ENCODE measurements at regions of chr1 and their contacts with region 1.

Region 1: DNA sequence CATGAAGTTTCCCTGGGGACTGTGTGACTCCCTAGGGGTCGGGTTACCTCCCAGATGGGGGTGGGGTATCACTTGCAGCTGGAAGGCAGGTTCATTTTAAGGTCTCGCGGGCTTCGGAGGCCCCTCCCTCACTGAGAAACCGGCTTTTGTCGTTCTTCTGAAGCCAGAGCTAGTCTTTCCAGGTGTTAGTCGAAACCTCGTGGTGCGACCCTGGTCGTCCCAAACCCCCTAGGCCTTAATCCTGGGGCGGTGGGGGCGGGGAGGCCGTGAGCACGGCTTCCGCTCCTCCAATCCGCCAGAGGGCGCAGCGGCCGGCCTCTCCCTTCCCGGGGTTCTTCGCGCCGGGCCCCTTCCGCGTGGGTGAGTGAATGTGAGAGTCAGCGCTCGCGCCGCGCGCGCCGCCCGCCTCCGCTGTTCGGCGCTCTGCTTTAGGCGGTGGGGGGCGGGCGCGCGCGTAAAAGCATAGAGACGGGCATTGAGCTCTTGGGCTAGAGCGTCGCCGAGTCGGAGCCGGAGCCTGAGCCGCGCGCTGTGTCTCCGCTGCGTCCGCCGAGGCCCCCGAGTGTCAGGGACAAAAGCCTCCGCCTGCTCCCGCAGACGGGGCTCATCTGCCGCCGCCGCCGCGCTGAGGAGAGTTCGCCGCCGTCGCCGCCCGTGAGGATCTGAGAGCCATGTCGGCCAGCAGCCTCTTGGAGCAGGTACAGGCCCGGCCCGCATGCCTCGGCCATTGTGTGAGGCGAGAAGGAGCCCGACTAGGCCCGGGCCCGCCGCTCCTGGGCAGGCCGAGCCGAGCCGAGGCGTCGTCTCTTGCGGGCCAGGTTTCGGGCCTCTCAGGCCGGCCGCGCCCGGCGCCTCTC is at the start of gene YTHDF2:
- DNase-seq: peak; percentile 96
- ATAC-seq: peak; percentile 95
- H3K4me3 ChIP-seq: peak within 1 kb of the TSS; percentile 93
- H3K27ac ChIP-seq: peak within 1 kb of the TSS; percentile 92
- H3K4me1 ChIP-seq: peaks cover 2% of the 10 kb centered on the region; the same call in 1 of the 2 replicates
- H3K27me3 ChIP-seq: no peaks in the 10 kb centered on the region
- CTCF ChIP-seq: peak; percentile 95
- POLR2A ChIP-seq: peak; percentile 87
- RAD21 ChIP-seq: peak; percentile 53
- total RNA-seq, gene YTHDF2: 88.3 and 94.3 TPM in 2 replicates

Region 2: GRCh38 chr1:28577052-28577678 is 159.5 kb before region 1 on chr1:
- CTCF ChIA-PET with region 1: no interaction called
- POLR2A ChIA-PET with region 1: no interaction called
- dilution Hi-C with region 1: no loop called
- in situ Hi-C with region 1: no loop called
- intact Hi-C with region 1: no loop called
- DNase-seq: no peak
- ATAC-seq: no peak
- H3K4me3 ChIP-seq: no peak overlapping the region
- H3K27ac ChIP-seq: no peak overlapping the region
- H3K4me1 ChIP-seq: peaks cover 6% of the 10 kb centered on the region; the same call in 1 of the 2 replicates
- H3K27me3 ChIP-seq: no peaks in the 10 kb centered on the region
- CTCF ChIP-seq: no peak
- POLR2A ChIP-seq: no peak
- RAD21 ChIP-seq: no peak

Region 3: DNA sequence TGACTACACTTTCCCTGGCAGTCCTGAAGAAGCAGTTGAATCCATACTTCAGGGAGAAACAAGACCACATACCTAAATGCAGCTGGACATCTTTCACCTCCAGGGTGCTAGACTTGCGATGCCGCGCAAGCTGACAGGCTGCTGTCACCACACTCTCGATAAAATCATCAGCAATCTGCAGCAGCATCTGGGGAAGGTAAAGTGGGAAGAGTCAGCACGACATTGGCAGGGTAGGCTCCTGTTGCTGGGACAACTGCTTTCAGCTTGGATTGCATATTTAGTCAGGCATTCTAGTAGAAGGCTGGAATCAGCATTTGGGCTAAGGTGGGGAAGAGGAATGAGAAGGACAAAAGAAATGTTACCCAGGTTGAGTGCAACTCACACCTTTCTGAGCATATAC is 123.5 kb before region 1 on chr1:
- CTCF ChIA-PET with region 1: no interaction called
- POLR2A ChIA-PET with region 1: no interaction called
- dilution Hi-C with region 1: no loop called
- in situ Hi-C with region 1: no loop called
- intact Hi-C with region 1: no loop called
- DNase-seq: no peak
- ATAC-seq: no peak
- H3K4me3 ChIP-seq: no peak overlapping the region
- H3K27ac ChIP-seq: no peak overlapping the region
- H3K4me1 ChIP-seq: no peaks in the 10 kb centered on the region
- H3K27me3 ChIP-seq: no peaks in the 10 kb centered on the region
- CTCF ChIP-seq: no peak
- POLR2A ChIP-seq: no peak
- RAD21 ChIP-seq: no peak

Region 4: GRCh38 chr1:28648474-28649198 is 88.0 kb before region 1 on chr1 and contains the start of gene RNU11:
- CTCF ChIA-PET with region 1: no interaction called
- POLR2A ChIA-PET with region 1: interaction called, 6 read pairs
- dilution Hi-C with region 1: no loop called
- in situ Hi-C with region 1: no loop called
- intact Hi-C with region 1: loop called (anchors 1 kb)
- DNase-seq: peak; percentile 100
- ATAC-seq: peak; percentile 72
- H3K4me3 ChIP-seq: peak within 1 kb of the TSS; percentile 28
- H3K27ac ChIP-seq: peak within 1 kb of the TSS; percentile 79
- H3K4me1 ChIP-seq: peaks cover 1% of the 10 kb centered on the region
- H3K27me3 ChIP-seq: no peaks in the 10 kb centered on the region
- CTCF ChIP-seq: no peak
- POLR2A ChIP-seq: peak; percentile 100
- RAD21 ChIP-seq: peak; percentile 15; the same call in 1 of the 2 replicates
- total RNA-seq, gene RNU11: under 0.01 TPM in 1 of 2 replicates, not detected in the other

Region 5: DNA sequence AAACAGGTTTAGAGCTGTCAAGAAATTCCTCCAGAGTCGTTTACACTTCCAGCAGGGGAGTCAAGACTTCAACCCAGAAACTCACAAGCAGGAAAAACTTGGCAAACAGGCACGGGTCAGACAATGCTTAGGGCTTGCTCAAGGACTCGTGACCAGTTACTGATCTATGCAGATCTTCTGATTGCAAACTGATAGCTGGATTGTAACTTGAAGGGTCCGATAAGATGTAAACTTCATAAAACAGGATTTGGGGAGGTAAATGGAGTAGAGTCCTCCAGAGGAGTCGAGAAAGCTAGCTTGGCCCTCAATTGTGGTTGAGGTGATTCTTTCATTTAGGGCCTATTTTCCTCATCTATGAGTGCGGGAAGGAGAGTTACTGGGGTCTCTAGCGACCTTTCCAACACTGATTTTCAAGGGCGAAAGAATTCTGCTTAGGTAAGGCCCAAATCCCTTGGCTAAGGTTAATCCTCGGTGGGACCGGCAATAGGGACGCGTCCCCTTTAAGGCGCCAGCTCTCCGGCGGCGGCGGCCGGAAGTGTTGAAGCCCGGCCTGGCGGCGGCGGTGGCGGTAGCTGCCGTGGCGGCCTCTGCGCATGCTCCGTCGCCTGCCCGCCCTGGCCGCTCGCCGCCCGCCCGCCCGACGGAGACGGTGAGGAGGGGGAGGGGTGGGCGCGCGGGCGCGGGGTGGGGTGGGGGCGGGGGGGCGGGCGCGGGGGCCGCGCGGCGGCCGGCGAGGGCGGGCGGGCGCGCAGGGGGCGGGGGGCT is 68.3 kb before region 1 on chr1 and contains the start of gene GMEB1:
- CTCF ChIA-PET with region 1: no interaction called
- POLR2A ChIA-PET with region 1: interaction called, 9 read pairs
- dilution Hi-C with region 1: no loop called
- in situ Hi-C with region 1: no loop called
- intact Hi-C with region 1: loop called (anchors 5 kb)
- DNase-seq: peak; percentile 77
- ATAC-seq: peak; percentile 81
- H3K4me3 ChIP-seq: peak within 1 kb of the TSS; percentile 59
- H3K27ac ChIP-seq: peak within 1 kb of the TSS; percentile 93
- H3K4me1 ChIP-seq: peaks cover 2% of the 10 kb centered on the region
- H3K27me3 ChIP-seq: no peaks in the 10 kb centered on the region
- CTCF ChIP-seq: 0 out of 2 replicates have a peak, but pooled peaks have one; percentile 5
- POLR2A ChIP-seq: no peak
- RAD21 ChIP-seq: no peak
- total RNA-seq, gene GMEB1: 7.9 and 8.6 TPM in 2 replicates

Region 6: GRCh38 chr1:28718586-28719331 is 17.9 kb before region 1 on chr1:
- CTCF ChIA-PET with region 1: interaction called, 10 read pairs
- POLR2A ChIA-PET with region 1: no interaction called
- dilution Hi-C with region 1: no loop called
- in situ Hi-C with region 1: no loop called
- intact Hi-C with region 1: no loop called
- DNase-seq: peak; percentile 67
- ATAC-seq: peak; percentile 87
- H3K4me3 ChIP-seq: no peak overlapping the region
- H3K27ac ChIP-seq: peak overlapping the region; percentile 42; the same call in 1 of the 2 replicates
- H3K4me1 ChIP-seq: peaks cover 4% of the 10 kb centered on the region
- H3K27me3 ChIP-seq: no peaks in the 10 kb centered on the region
- CTCF ChIP-seq: no peak
- POLR2A ChIP-seq: no peak
- RAD21 ChIP-seq: no peak

Region 7: DNA sequence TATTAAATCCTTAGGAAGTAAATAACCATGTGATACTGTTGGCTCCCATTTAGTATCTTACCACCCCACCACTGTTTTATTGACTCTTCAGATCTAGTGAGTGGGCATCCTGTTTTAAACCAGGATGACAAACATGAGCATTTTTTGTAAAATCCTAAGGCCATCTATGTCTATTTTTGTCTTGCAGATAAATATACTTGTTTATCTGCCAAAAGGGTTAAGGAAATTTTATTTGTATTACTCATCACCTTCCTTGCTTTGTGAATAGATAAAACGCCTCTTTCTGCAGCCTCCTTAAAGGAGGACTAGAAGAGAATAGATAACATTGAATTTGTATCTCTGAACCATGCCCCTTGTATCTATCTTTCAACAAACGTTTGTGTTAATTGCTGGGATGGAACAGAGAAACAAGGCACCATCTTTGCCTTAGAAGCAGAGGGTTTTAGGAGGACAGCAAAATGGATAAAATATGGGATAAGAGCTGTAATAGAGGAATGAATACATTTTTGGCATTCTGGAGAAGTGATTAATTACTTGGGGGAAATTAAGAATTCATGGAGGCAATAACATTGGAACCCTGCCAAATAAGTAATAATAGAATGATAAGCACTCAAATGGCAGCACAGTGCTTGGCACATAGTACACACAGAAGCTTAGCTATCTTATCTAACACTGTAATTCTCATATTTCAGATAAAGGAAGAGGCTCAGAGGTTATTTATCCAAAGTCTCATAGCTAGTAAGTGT is 14.8 kb after region 1 on chr1:
- CTCF ChIA-PET with region 1: interaction called, 8 read pairs
- POLR2A ChIA-PET with region 1: interaction called, 8 read pairs
- dilution Hi-C with region 1: no loop called
- in situ Hi-C with region 1: no loop called
- intact Hi-C with region 1: loop called (anchors 2 kb)
- DNase-seq: peak; percentile 79
- ATAC-seq: peak; percentile 50
- H3K4me3 ChIP-seq: no peak overlapping the region
- H3K27ac ChIP-seq: peak overlapping the region; percentile 22; the same call in 1 of the 2 replicates
- H3K4me1 ChIP-seq: peaks cover 16% of the 10 kb centered on the region
- H3K27me3 ChIP-seq: no peaks in the 10 kb centered on the region
- CTCF ChIP-seq: no peak
- POLR2A ChIP-seq: no peak
- RAD21 ChIP-seq: no peak

Region 8: DNA sequence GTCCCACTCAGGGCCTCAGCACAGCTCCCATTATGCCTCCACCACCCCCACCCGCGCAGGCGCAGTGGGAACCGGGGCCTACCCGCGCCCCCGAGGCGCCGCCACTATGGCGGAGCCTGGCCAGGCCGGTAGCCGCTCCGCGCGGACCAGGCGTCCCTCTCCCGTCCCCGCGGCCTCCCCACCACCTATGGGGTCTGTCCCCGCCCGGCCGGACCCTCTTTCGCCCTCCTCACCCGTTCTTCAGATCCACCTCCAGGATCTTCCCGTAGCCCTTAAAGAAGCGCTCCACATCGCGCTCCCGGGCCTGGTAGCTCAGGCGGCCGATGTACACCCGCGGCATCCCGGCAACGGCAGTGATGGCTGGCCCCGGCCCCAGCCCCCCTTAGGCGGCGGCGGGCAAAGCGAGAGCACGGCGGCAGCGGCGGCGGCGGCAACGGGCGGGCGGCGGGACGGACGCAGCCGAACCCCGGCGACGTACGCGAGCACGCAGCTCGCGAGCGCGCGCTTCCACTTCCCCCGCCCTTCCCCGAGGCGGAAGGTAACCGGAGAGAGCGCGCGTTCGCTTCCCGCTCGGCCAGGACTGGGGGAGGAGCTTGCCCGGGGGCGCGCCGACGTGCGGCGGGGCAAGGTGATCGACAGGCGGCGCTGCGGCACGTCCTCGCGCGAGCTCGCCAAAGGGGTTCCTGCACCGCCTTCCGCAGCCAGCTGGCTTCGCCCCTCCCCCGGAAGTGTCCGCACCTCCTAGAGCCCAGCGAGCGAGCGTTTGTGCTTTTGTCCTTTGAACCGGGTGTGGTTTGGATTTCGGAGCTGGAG is 444.9 kb after region 1 on chr1 and contains the start of gene SRSF4:
- CTCF ChIA-PET with region 1: interaction called, 3 read pairs
- POLR2A ChIA-PET with region 1: interaction called, 22 read pairs
- dilution Hi-C with region 1: no loop called
- in situ Hi-C with region 1: no loop called
- intact Hi-C with region 1: no loop called
- DNase-seq: peak; percentile 98
- ATAC-seq: peak; percentile 94
- H3K4me3 ChIP-seq: peak within 1 kb of the TSS; percentile 84
- H3K27ac ChIP-seq: peak within 1 kb of the TSS; percentile 97
- H3K4me1 ChIP-seq: peaks cover 10% of the 10 kb centered on the region
- H3K27me3 ChIP-seq: no peaks in the 10 kb centered on the region
- CTCF ChIP-seq: peak; percentile 82
- POLR2A ChIP-seq: peak; percentile 90
- RAD21 ChIP-seq: peak; percentile 59
- total RNA-seq, gene SRSF4: 20.8 and 38.6 TPM in 2 replicates